A549 (cell line): ENCODE measurements at regions of chr2 and their contacts with region 1.

Region 1: GRCh38 chr2:130181325-130181879 is at the start of gene SMPD4:
- DNase-seq: peak; percentile 43 to 97
- ATAC-seq: peak; percentile 80 to 82
- H3K4me3 ChIP-seq: peak within 1 kb of the TSS; percentile 99
- H3K27ac ChIP-seq: peak within 1 kb of the TSS; percentile 93 to 99
- H3K4me1 ChIP-seq: peaks cover 9% of the 10 kb centered on the region; the same call in 2 of the 3 replicates
- CTCF ChIP-seq: no peak
- EP300 ChIP-seq: no peak
- POLR2A ChIP-seq: peak; percentile 54
- RAD21 ChIP-seq: no peak
- polyA plus RNA-seq, gene SMPD4: 43.3 and 47.1 TPM in 2 replicates

Region 2: GRCh38 chr2:130135692-130136541 is 45.5 kb before region 1 on chr2:
- CTCF ChIA-PET with region 1: no interaction called
- POLR2A ChIA-PET with region 1: no interaction called
- DNase-seq: no peak
- ATAC-seq: no peak
- H3K4me3 ChIP-seq: no peak overlapping the region
- H3K27ac ChIP-seq: no peak overlapping the region
- H3K4me1 ChIP-seq: no peaks in the 10 kb centered on the region
- CTCF ChIP-seq: no peak
- EP300 ChIP-seq: no peak
- POLR2A ChIP-seq: no peak
- RAD21 ChIP-seq: no peak

Region 3: DNA sequence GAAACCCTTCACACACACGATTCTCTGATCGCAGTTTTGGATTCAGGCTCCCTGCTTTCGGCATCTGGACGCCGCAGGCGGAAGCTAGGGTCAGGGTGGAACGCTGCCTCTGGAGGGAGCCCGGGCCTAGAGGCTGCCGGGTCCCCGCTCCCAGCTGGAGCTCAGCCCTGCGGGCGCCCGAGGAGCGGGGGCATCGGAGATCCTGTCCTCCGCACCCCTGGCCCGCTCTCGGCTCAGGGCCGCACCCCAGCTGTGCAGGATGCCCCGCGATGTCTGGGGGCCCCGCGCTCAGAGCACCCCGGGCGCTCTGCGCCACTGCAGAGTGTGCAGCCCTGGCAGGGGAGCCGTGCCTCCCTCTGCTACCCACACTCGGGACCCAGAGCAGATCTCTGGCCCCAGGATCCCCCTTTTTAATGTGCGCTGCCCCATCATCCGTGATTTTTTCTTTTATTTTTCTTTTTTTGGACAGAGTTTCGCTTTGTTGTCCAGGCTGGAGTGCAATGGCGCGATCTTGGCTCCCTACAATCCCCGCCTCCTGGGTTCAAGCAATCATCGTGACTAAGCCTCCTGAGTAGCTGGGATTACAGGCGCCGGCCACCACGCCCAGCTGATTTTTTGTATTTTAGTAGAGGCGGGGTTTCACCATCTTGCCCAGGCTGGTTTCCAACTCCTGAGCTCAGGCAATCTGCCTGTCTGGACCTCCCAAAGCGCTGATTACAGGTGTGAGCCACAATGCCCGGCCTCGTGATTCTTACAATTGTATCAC is 71.7 kb after region 1 on chr2:
- CTCF ChIA-PET with region 1: interaction called, 10 read pairs
- POLR2A ChIA-PET with region 1: no interaction called
- DNase-seq: peak; percentile 35 to 56
- ATAC-seq: peak; percentile 88 to 91
- H3K4me3 ChIP-seq: peak overlapping the region; percentile 38
- H3K27ac ChIP-seq: peak overlapping the region; percentile 68 to 86
- H3K4me1 ChIP-seq: no peaks in the 10 kb centered on the region
- CTCF ChIP-seq: no peak
- EP300 ChIP-seq: no peak
- POLR2A ChIP-seq: no peak
- RAD21 ChIP-seq: no peak

Region 4: DNA sequence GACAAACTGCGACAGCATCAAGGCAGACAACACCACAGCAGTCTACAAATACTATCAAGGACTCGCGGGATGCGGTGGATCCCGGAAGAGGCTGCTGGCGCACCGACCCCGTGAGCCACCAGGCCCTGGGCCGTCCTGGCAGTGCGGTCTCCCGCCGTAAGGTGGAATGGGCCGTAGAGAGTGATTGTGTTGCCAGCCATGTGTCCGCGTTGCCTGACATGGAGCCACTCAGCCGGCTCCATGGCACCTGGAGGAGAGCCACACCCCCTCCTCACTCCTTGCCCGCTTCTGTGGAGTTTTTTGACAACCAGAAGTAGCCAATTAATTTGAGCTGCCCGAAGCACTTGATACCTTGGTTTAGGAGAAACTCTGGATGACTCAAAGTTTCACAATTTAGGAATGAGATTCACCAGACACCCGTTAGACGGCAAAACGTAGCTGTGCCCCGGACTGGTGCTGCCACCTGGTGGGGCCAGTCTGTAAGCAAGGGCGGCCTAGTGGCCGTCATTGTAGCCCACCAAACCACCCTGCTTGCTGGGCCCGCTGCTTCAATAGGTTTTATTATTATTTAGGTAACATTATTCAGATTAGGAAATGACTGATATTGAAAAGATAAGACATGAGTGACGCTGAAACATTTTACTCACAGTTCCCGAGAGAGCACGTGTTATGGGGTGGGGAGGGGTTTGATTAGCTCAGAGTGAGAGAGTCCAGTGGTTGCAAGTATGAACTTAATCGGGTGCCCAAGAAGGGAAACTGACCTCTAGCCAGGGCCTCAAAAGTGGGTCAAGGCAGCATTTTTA is 151.1 kb after region 1 on chr2:
- CTCF ChIA-PET with region 1: interaction called, 96 read pairs
- POLR2A ChIA-PET with region 1: interaction called, 8 read pairs
- DNase-seq: peak; percentile 52 to 75
- ATAC-seq: peak; percentile 60 to 78
- H3K4me3 ChIP-seq: peak overlapping the region; percentile 39
- H3K27ac ChIP-seq: peak overlapping the region; percentile 21 to 53; a peak in 2 of 6 replicates
- H3K4me1 ChIP-seq: no peaks in the 10 kb centered on the region; the same call in 2 of the 3 replicates
- CTCF ChIP-seq: peak; percentile 97
- EP300 ChIP-seq: no peak
- POLR2A ChIP-seq: no peak
- RAD21 ChIP-seq: peak; percentile 95 to 98

Region 5: GRCh38 chr2:130342533-130343275 is 161.3 kb after region 1 on chr2 and contains the start of gene IMP4:
- CTCF ChIA-PET with region 1: interaction called, 16 read pairs
- POLR2A ChIA-PET with region 1: interaction called, 24 read pairs
- DNase-seq: peak; percentile 85 to 99
- ATAC-seq: peak; percentile 87 to 95
- H3K4me3 ChIP-seq: peak within 1 kb of the TSS; percentile 88
- H3K27ac ChIP-seq: peak within 1 kb of the TSS; percentile 90 to 95
- H3K4me1 ChIP-seq: peaks cover 18% of the 10 kb centered on the region
- CTCF ChIP-seq: no peak
- EP300 ChIP-seq: no peak
- POLR2A ChIP-seq: peak; percentile 76
- RAD21 ChIP-seq: no peak
- polyA plus RNA-seq, gene IMP4: 113 and 118 TPM in 2 replicates

Region 6: GRCh38 chr2:131492418-131493198 is 1311.2 kb after region 1 on chr2:
- CTCF ChIA-PET with region 1: no interaction called
- POLR2A ChIA-PET with region 1: interaction called, 11 read pairs
- DNase-seq: peak; percentile 93 to 98
- ATAC-seq: peak; percentile 83 to 89
- H3K4me3 ChIP-seq: peak overlapping the region; percentile 99
- H3K27ac ChIP-seq: peak overlapping the region; percentile 98 to 99
- H3K4me1 ChIP-seq: peaks cover 26% of the 10 kb centered on the region; the same call in 2 of the 3 replicates
- CTCF ChIP-seq: peak; percentile 85
- EP300 ChIP-seq: no peak
- POLR2A ChIP-seq: peak; percentile 55
- RAD21 ChIP-seq: peak; percentile 5 to 31; a peak in 2 of 5 replicates